ENCODE measurements at regions of chr2 and their contacts with region 1.

Region 1: GRCh38 chr2:211157856-211158463 is 601.6 kb downstream of the CPS1 start:
- DNase-seq: peak; percentile 28
- H3K4me3 Mint-ChIP-seq: no peak overlapping the region
- H3K27ac Mint-ChIP-seq: no peak overlapping the region
- H3K4me1 Mint-ChIP-seq: no peaks in the 10 kb centered on the region
- H3K27me3 Mint-ChIP-seq: no peaks in the 10 kb centered on the region

Region 2: GRCh38 chr2:210252699-210253606 is 905.0 kb before region 1 on chr2:
- intact Hi-C with region 1: loop called (anchors 2 kb)
- DNase-seq: no peak
- H3K4me3 Mint-ChIP-seq: no peak overlapping the region
- H3K27ac Mint-ChIP-seq: no peak overlapping the region
- H3K4me1 Mint-ChIP-seq: no peaks in the 10 kb centered on the region
- H3K27me3 Mint-ChIP-seq: no peaks in the 10 kb centered on the region

Region 3: DNA sequence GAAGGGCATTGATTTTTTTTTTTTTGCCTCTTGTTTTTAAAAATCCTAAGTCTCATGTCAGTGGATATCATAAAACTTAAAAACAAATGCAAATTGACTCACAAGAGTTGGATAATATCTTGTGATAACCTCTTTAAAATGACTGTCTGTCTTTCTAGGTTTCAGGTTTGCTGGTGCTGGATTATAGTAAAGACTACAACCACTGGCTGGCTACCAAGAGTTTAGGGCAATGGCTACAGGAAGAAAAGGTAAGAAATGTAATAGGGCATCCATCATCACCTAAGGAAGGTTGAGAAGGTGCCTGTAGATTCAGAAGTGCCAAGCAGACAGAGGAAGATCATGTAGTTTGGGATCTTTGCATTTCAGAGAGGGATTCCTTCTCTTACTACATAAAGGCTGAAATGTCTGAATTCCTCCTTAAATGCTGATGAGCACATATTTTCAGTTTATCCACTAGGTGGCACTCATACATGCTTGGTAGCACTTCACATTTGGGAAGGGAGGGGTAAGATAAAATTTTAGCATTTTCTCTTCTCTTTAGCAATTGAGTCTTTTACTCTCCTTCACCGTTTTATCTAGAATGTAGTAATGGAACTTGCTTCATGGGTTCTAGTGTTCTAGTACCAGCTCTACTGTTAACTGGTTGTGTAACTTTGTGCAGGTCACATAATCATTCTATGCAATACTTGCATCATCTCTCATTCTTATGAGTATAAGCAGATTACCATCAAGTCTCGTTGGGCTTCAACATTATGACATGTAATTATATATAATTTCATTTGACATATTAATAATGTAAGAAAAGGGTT is 580.5 kb before region 1 on chr2:
- intact Hi-C with region 1: loop called (anchors 1 kb)
- DNase-seq: no peak
- H3K4me3 Mint-ChIP-seq: no peak overlapping the region
- H3K27ac Mint-ChIP-seq: no peak overlapping the region
- H3K4me1 Mint-ChIP-seq: no peaks in the 10 kb centered on the region
- H3K27me3 Mint-ChIP-seq: peaks cover 2% of the 10 kb centered on the region

Region 4: DNA sequence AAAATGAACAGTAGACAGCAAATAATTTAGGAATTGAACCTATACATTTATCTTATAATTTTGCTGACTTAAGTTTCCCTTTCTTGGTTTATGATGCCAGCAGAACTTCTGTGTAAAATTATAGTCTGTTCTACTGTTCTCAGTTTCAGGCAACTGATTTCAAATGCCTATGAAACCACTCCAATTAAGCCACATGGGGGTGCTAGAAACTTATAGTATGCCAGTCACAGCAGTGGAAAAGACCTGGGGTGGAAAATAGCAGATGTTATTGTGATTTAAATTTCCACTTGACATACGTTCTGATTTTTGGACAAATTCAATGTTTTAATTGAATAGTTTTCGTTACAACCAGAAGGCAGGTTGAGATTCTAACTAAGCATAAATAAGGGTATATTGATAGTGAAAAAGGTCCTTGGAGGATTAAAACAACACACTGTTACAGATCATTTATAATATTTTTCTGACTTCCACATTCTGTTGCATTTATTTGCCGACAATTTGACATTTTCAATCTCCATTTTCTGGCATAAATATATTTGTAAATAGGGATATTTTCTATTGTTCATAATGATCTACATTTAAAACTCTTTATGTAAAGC is 540.1 kb before region 1 on chr2:
- intact Hi-C with region 1: loop called (anchors 1 kb)
- DNase-seq: no peak
- H3K4me3 Mint-ChIP-seq: no peak overlapping the region
- H3K27ac Mint-ChIP-seq: no peak overlapping the region
- H3K4me1 Mint-ChIP-seq: no peaks in the 10 kb centered on the region
- H3K27me3 Mint-ChIP-seq: no peaks in the 10 kb centered on the region

Region 5: DNA sequence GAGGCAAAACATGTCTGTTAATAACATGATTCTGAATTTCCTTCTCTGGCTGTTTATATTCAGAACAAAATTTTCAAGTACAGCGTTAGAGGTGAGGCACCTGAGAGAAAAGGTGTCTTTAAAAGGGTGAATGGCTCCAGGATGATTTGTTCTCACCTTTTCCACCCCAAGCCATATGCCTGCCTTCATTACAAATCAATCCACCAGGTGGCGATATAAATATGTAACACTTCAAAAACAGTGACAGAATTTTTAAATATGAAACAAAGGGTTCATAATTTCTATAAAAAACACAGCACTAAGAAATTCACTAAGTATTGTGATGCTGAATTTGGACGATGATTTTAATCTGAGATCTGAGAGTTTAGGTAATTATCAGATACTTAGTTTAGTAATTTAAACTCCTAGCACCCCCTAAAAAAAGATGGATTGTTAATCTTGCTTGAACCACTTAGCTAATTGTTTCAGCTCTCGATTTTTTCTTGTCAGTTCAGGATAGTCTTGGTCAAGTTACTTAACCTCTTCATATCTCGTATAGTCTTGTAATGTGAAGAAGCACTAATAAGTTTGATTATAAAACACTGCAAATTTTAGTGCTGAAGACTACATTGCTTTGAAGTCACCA is 72.8 kb before region 1 on chr2:
- intact Hi-C with region 1: loop called (anchors 5 kb)
- DNase-seq: no peak
- H3K4me3 Mint-ChIP-seq: no peak overlapping the region
- H3K27ac Mint-ChIP-seq: no peak overlapping the region
- H3K4me1 Mint-ChIP-seq: no peaks in the 10 kb centered on the region
- H3K27me3 Mint-ChIP-seq: no peaks in the 10 kb centered on the region

Region 6: DNA sequence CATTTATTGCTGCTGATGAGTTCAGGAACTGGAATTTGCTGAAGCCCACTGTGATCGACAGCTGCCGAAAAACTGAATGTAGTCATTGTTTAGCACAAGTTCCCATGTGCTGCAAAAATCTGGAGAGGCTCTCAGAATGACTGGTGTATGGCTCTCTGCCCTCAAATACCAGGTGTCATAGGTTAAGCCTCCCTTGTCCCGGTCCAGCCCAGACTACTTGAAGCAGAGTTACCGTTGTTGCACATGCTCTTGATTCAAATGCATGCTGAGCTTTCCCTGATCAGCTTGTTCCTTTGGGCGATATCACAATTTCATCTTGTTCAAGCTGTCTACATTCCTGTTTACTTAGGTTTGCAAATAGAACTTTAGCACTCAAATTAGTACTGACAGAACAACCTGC is 23.7 kb after region 1 on chr2:
- intact Hi-C with region 1: no loop called
- DNase-seq: no peak
- H3K4me3 Mint-ChIP-seq: no peak overlapping the region
- H3K27ac Mint-ChIP-seq: no peak overlapping the region
- H3K4me1 Mint-ChIP-seq: no peaks in the 10 kb centered on the region
- H3K27me3 Mint-ChIP-seq: no peaks in the 10 kb centered on the region

Region 7: GRCh38 chr2:211380041-211380440 is 222.1 kb after region 1 on chr2:
- intact Hi-C with region 1: no loop called
- DNase-seq: no peak
- H3K4me3 Mint-ChIP-seq: no peak overlapping the region
- H3K27ac Mint-ChIP-seq: no peak overlapping the region
- H3K4me1 Mint-ChIP-seq: no peaks in the 10 kb centered on the region
- H3K27me3 Mint-ChIP-seq: no peaks in the 10 kb centered on the region

Region 8: GRCh38 chr2:211665299-211665698 is 507.3 kb after region 1 on chr2:
- intact Hi-C with region 1: no loop called
- DNase-seq: no peak
- H3K4me3 Mint-ChIP-seq: no peak overlapping the region
- H3K27ac Mint-ChIP-seq: no peak overlapping the region
- H3K4me1 Mint-ChIP-seq: no peaks in the 10 kb centered on the region
- H3K27me3 Mint-ChIP-seq: no peaks in the 10 kb centered on the region

Measured in activated T-helper 1 cell treated with anti-CD3 and anti-CD28 coated beads, Interleukin-12 subunit alpha, Interleukin-12 subunit beta, Interleukin-2, Interleukin-4 antibody, amounts not matched to agents 30 ng/mL and 10 ng/mL and 1 ng/mL, durations not matched to agents 14 hours and 24 hours and 36 hours (primary cell).